Mammary epithelial cell (primary cell): ENCODE measurements at regions of chr10 and their contacts with region 1.

Region 1: DNA sequence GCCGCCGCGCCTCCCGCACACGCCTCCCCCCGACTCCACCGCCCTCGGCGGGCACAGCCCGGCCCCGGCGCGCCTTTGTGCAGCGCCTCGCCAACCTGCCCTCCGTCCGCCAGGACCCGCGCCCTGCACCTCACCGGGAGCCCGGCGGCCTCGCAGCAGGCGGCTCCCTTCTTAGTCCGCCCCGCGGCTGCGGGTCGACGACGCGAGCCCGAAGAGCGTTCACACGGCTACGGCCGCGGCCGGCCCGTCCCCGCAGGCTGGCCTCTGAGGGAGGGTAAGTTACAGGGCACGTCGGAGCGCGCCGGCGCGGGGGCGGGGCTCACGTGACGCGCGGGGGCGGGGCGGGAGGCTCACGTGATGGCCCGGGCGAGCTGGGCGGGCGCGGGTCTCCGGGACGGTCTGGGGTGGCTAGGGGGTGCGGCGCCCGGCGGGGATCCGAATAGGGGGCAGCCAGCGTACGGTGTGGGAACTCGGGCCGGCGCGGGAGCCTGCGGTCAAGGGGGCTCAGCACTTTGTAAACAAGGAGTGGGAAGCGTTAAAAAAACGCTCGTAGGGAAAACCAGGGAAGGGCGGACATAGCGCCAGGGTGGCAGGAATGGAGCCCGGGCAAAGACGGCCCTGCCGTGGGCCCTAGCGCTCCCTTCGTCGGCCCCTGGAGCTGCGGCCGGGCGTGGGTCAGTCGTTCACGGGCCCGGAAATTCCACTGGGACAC is at the start of gene ARHGAP12:
- DNase-seq: peak; percentile 82
- H3K4me3 ChIP-seq: peak within 1 kb of the TSS; percentile 54 to 92 (median 56)
- H3K27ac ChIP-seq: peak within 1 kb of the TSS; percentile 85
- H3K4me1 ChIP-seq: peaks cover 36% of the 10 kb centered on the region
- H3K27me3 ChIP-seq: no peaks in the 10 kb centered on the region
- CTCF ChIP-seq: no peak
- total RNA-seq, gene ARHGAP12: 26.0 to 38.8 TPM

Region 2: DNA sequence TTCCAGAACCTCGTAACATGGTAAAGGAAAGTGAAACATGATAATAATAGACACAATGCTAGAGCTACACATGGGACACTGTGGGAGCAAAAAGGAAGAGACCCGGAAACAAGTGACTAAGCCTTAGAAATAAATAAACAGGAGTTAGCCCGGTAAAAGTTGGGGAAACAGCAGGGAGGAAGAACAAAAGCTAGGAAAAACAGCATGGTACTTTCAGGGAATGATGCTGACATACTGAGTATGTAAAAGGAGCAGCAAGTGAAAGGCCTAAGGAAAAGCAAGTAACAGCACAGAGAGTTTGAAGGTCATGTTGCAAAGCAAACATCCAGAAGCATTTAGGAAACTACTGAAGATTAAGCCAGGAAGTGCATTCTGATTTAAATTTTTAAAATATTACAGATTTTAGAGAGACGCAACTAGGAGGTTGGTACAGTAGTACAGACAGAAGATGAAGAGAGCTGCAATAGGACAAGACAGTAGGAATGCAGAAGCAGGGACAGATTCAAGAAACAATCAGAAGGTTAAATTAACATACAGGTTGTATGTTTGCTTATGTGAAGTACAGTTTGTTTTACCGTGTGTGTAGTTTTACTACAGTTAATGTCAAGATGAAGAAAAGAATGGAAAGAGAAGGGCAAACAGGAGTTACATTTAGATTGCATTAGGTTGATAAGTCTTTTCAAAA is 63.7 kb before region 1 on chr10:
- CTCF ChIA-PET with region 1: interaction called, 3 read pairs
- dilution Hi-C with region 1: no loop called
- in situ Hi-C with region 1: no loop called
- intact Hi-C with region 1: loop called (anchors 1 kb)
- DNase-seq: no peak
- H3K4me3 ChIP-seq: no peak overlapping the region
- H3K27ac ChIP-seq: no peak overlapping the region
- H3K4me1 ChIP-seq: peaks cover 6% of the 10 kb centered on the region
- H3K27me3 ChIP-seq: no peaks in the 10 kb centered on the region
- CTCF ChIP-seq: no peak

Region 3: DNA sequence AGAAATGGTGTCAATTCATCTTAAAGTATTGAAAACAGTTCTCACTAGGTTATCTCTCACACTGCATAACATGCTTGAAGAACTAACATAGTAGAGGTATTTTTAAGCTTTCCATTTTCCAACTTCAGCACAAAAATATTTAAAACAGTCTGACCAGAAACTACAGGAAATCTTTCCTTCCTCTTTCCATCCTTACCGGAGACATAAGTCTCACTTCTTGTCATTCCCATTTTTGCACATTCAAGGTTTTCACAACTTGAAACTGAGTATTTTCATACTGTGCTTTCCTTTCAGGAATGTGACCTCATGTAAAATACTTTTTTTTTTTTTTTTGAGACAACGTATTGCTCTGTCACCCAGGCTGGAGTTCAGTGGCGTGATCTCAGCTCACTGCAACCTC is 45.3 kb before region 1 on chr10:
- CTCF ChIA-PET with region 1: no interaction called
- dilution Hi-C with region 1: no loop called
- in situ Hi-C with region 1: no loop called
- intact Hi-C with region 1: loop called (anchors 5 kb)
- DNase-seq: no peak
- H3K4me3 ChIP-seq: no peak overlapping the region
- H3K27ac ChIP-seq: no peak overlapping the region
- H3K4me1 ChIP-seq: peaks cover 5% of the 10 kb centered on the region
- H3K27me3 ChIP-seq: no peaks in the 10 kb centered on the region
- CTCF ChIP-seq: no peak

Region 4: GRCh38 chr10:31940839-31941653 is 12.3 kb after region 1 on chr10:
- CTCF ChIA-PET with region 1: no interaction called
- dilution Hi-C with region 1: no loop called
- in situ Hi-C with region 1: no loop called
- intact Hi-C with region 1: loop called (anchors 1 kb)
- DNase-seq: peak; percentile 98
- H3K4me3 ChIP-seq: peak overlapping the region in 1 of 3 experiments; percentile 9
- H3K27ac ChIP-seq: peak overlapping the region; percentile 99
- H3K4me1 ChIP-seq: peaks cover 50% of the 10 kb centered on the region
- H3K27me3 ChIP-seq: no peaks in the 10 kb centered on the region
- CTCF ChIP-seq: no peak

Region 5: GRCh38 chr10:31947144-31947926 is 18.6 kb after region 1 on chr10:
- CTCF ChIA-PET with region 1: no interaction called
- dilution Hi-C with region 1: no loop called
- in situ Hi-C with region 1: no loop called
- intact Hi-C with region 1: loop called (anchors 2 kb)
- DNase-seq: peak; percentile 84
- H3K4me3 ChIP-seq: no peak overlapping the region
- H3K27ac ChIP-seq: peak overlapping the region; percentile 78
- H3K4me1 ChIP-seq: peaks cover 31% of the 10 kb centered on the region
- H3K27me3 ChIP-seq: no peaks in the 10 kb centered on the region
- CTCF ChIP-seq: peak; percentile 42 to 67

Region 6: GRCh38 chr10:31961277-31962074 is 32.8 kb after region 1 on chr10:
- CTCF ChIA-PET with region 1: no interaction called
- dilution Hi-C with region 1: no loop called
- in situ Hi-C with region 1: no loop called
- intact Hi-C with region 1: loop called (anchors 1 kb)
- DNase-seq: peak; percentile 96
- H3K4me3 ChIP-seq: peak overlapping the region in 2 of 3 experiments; percentile 2 to 14
- H3K27ac ChIP-seq: peak overlapping the region; percentile 78
- H3K4me1 ChIP-seq: peaks cover 47% of the 10 kb centered on the region
- H3K27me3 ChIP-seq: no peaks in the 10 kb centered on the region
- CTCF ChIP-seq: peak in 1 of 2 donors; percentile 8

Region 7: DNA sequence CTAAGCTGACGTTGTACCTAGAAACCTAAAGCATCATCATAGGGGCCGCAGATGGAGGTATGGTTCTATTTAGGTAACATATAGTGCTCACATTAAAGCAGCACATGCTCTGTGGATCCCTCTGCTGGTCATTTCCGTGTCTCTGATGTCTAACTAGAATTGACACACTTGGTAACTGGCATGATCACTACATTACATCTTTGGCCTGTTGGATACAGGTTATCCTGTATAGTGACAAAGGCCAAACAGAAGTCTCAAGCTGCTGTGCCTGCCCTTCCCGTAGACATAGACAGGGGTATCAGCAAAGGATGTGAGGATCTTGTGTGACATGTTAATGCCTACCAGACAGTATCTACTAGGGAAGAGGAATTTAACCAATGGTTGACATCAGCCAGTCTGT is 76.3 kb after region 1 on chr10:
- CTCF ChIA-PET with region 1: interaction called, 8 read pairs
- dilution Hi-C with region 1: no loop called
- in situ Hi-C with region 1: no loop called
- intact Hi-C with region 1: loop called (anchors 2 kb)
- DNase-seq: peak; percentile 25
- H3K4me3 ChIP-seq: no peak overlapping the region
- H3K27ac ChIP-seq: no peak overlapping the region
- H3K4me1 ChIP-seq: no peaks in the 10 kb centered on the region
- H3K27me3 ChIP-seq: no peaks in the 10 kb centered on the region
- CTCF ChIP-seq: peak; percentile 58 to 65